ENCODE measurements at regions of chr9 and their contacts with region 1.

Region 1: GRCh38 chr9:32378993-32379729 is 5.3 kb upstream of the ACO1 start:
- DNase-seq: peak; percentile 80
- H3K4me3 Mint-ChIP-seq: no peak overlapping the region
- H3K27ac Mint-ChIP-seq: no peak overlapping the region
- H3K4me1 Mint-ChIP-seq: peaks cover 16% of the 10 kb centered on the region
- H3K27me3 Mint-ChIP-seq: peaks cover 35% of the 10 kb centered on the region

Region 2: GRCh38 chr9:32508728-32509127 is 129.6 kb after region 1 on chr9:
- CTCF ChIA-PET with region 1: interaction called, 10 read pairs
- POLR2A ChIA-PET with region 1: no interaction called
- DNase-seq: no peak
- H3K4me3 Mint-ChIP-seq: no peak overlapping the region
- H3K27ac Mint-ChIP-seq: no peak overlapping the region
- H3K4me1 Mint-ChIP-seq: peaks cover 40% of the 10 kb centered on the region
- H3K27me3 Mint-ChIP-seq: no peaks in the 10 kb centered on the region

Region 3: DNA sequence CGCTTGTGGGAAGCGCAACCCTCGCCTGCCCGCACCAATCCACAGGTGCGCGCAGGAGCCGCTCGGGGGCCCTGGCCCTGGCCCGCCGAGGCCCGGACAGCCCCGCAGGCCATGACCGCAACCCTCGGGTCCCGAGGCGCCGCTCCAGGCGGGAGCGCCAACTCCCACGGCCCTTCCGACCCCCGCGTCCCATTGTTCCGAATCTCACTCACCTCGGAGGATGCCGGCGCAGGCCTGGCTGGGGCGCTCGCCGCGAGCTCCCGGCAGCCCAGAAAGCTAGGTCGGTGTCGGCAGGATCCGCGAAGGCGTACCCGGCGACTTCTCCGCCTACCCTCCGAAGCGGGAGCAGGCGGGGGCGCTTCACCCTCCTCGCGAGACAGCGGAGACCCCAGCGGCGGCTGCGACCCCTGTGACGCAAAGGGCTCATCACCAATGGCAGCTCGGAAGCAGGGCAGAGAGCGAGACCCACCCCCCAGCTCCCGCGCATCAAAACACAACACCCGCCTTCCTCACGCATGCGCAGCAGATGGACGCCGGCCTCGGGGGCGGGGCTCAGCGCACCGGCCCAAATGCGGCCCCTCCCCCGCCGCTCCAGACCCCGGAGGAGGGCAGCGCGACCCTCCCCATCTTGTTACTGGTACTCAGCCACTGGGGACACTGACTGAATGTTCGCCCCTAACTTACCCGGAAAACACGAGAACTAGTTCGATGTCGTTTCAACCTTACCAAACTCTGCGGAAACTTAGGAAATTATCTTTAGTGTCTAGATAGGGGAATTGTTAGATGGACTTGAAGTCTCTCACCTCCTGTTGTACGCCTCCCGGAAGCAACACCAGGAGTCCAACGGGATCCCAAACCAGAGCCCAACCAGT is 171.6 kb after region 1 on chr9:
- CTCF ChIA-PET with region 1: interaction called, 12 read pairs
- POLR2A ChIA-PET with region 1: no interaction called
- DNase-seq: peak; percentile 96
- H3K4me3 Mint-ChIP-seq: peak overlapping the region; percentile 94
- H3K27ac Mint-ChIP-seq: peak overlapping the region; percentile 100
- H3K4me1 Mint-ChIP-seq: peaks cover 33% of the 10 kb centered on the region
- H3K27me3 Mint-ChIP-seq: no peaks in the 10 kb centered on the region

Region 4: DNA sequence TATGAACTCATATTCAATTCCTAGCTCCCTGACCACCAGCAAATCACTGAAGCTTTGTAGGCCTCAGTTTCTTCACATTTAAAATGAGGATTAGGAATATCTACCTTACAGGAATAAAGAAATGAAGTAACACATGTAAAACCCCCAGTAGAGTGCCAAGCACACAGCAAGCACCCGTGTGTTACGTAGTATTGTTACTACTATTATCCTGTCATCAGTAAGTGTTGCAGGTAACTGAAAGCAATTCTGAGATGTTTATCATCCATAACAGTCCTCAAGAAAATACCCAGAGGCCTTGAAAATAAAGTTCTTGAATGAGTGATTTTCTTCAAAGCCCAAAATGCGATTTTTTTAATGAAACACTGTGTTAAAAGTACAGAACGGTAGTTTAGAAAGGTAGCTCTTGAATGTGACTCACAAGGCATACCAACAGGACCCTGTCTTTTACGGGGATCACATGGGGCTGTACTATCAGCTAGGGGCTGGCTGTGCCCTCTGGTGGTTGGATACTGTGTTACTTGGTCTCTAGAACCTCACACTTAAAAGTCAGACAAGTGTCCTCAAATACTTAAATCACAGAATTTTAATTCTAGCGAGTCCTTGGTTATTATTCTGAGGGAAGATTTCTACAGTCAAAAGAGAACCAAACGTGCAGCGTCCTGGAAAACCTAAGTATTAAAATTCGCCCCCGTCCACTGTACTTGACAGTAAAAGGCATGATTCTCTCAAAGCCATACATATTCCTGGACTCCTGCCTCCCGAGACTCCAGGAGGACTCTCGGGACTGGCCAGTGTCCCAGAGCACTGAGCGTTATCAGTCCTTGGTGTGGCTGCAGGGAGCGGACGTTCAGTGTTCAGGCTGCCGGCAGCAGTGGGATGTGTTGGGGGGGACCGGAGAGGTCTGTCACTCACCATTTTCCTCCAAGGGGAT is 193.1 kb after region 1 on chr9:
- CTCF ChIA-PET with region 1: interaction called, 58 read pairs
- POLR2A ChIA-PET with region 1: interaction called, 6 read pairs
- DNase-seq: peak; percentile 85
- H3K4me3 Mint-ChIP-seq: peak overlapping the region; percentile 98
- H3K27ac Mint-ChIP-seq: peak overlapping the region; percentile 99
- H3K4me1 Mint-ChIP-seq: peaks cover 31% of the 10 kb centered on the region
- H3K27me3 Mint-ChIP-seq: no peaks in the 10 kb centered on the region

Region 5: GRCh38 chr9:32579706-32580331 is 200.7 kb after region 1 on chr9:
- CTCF ChIA-PET with region 1: interaction called, 94 read pairs
- POLR2A ChIA-PET with region 1: no interaction called
- DNase-seq: peak; percentile 83
- H3K4me3 Mint-ChIP-seq: no peak overlapping the region
- H3K27ac Mint-ChIP-seq: no peak overlapping the region
- H3K4me1 Mint-ChIP-seq: peaks cover 1% of the 10 kb centered on the region
- H3K27me3 Mint-ChIP-seq: peaks cover 12% of the 10 kb centered on the region

Region 6: GRCh38 chr9:32589083-32589723 is 210.0 kb after region 1 on chr9:
- CTCF ChIA-PET with region 1: interaction called, 32 read pairs
- POLR2A ChIA-PET with region 1: no interaction called
- DNase-seq: no peak
- H3K4me3 Mint-ChIP-seq: no peak overlapping the region
- H3K27ac Mint-ChIP-seq: no peak overlapping the region
- H3K4me1 Mint-ChIP-seq: no peaks in the 10 kb centered on the region
- H3K27me3 Mint-ChIP-seq: peaks cover 21% of the 10 kb centered on the region

Region 7: DNA sequence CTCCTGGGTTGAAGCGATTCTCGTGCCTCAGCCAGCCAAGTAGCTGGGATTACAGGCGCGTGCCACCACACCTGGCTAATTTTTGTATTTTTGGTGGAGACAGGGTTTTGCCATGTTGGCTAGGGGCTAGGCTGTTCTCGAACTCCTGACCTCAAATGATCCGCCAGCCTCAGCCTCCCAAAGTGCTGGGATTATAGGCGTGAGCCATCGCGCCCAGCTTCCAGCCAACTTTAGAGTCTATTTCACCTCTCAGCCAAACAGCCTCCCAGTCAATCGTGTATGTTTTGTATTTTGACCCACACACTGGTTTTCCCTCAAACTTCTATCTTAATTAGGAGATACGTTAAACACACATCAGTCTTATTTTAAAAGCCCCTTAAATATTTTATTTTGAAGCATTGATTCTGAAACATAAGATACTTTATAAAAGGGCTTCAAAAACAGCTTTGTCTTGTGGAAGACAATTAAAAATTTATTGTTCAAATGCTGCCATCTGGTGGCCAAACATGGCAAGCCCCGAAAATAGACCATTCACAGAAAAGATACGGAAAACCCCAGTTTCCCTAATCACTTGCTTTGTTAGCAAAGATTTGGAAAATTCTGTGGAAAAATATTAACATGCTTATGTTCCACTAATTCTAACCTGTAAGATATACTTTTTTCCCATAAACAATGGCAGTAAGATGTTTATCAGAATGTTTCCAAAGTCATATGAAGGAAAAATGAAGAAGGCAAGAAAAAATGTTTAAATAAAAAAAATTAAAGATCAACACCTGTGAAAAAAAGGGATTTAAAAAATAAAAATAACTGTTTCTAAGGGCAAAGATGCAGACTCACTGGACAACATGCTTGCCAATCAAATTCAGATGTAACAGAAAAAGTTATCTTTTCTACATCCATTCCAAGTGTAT is 589.2 kb after region 1 on chr9:
- CTCF ChIA-PET with region 1: interaction called, 19 read pairs
- POLR2A ChIA-PET with region 1: no interaction called
- DNase-seq: peak; percentile 66
- H3K4me3 Mint-ChIP-seq: no peak overlapping the region
- H3K27ac Mint-ChIP-seq: no peak overlapping the region
- H3K4me1 Mint-ChIP-seq: no peaks in the 10 kb centered on the region
- H3K27me3 Mint-ChIP-seq: no peaks in the 10 kb centered on the region